IMR-90 (cell line): ENCODE measurements at regions of chr5 and their contacts with region 1.

Region 1: DNA sequence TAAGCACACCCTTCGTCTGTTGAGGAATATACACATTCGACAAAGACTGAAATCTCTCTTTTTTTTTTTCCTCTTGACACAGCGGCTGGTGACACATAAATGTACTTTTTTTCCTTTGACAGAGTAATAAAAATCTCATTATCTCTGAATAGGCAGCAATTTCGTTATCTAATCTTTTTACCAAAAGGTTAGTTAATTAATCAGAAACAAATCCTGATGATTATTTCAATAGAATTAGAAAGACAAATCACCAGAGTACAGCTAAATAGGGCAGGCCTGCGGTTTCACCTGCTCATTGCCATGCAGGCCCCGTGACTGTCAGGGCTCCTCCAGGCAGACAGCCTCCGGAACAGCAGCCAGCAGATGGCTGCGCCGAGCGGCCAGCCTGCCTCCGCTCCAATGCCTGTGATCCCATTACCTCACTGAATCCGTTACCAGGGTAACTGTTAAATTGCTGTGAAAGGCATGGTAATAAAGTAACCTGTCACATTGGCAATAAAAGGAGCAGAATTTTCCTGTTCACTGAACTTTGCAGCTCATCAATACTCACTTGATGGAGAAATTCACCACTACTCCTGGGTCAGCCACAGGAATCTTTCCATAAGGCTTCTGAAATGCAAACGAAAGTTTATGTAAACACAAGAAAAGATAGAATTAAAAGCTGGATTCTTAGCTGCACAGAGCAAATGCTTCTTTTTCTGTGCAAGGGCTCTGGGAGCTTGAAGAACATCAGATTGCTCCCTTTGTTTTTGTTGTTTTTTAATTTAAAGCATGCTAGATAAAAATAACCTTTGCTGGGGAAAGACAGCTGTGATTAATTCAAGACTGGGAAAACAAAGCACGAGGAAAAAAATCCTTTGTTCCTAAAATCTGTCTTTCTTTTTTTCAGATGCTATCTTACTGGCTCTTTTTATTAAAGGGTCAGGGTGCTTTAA is 666.4 kb upstream of the ZNF608 start:
- DNase-seq: peak; percentile 91
- ATAC-seq: peak; percentile 84
- H3K4me3 ChIP-seq: peak overlapping the region; percentile 10; the same call in 1 of the 2 replicates
- H3K27ac ChIP-seq: no peak overlapping the region
- H3K4me1 ChIP-seq: peaks cover 20% of the 10 kb centered on the region
- H3K27me3 ChIP-seq: no peaks in the 10 kb centered on the region
- CTCF ChIP-seq: peak; percentile 42
- POLR2A ChIP-seq: no peak
- RAD21 ChIP-seq: peak; percentile 55

Region 2: GRCh38 chr5:124649491-124650146 is 763.2 kb before region 1 on chr5:
- CTCF ChIA-PET with region 1: no interaction called
- POLR2A ChIA-PET with region 1: no interaction called
- dilution Hi-C with region 1: no loop called
- in situ Hi-C with region 1: no loop called
- intact Hi-C with region 1: loop called (anchors 5 kb)
- DNase-seq: peak; percentile 93
- ATAC-seq: peak; percentile 23; the same call in 1 of the 2 replicates
- H3K4me3 ChIP-seq: no peak overlapping the region
- H3K27ac ChIP-seq: peak overlapping the region; percentile 85
- H3K4me1 ChIP-seq: peaks cover 23% of the 10 kb centered on the region
- H3K27me3 ChIP-seq: no peaks in the 10 kb centered on the region
- CTCF ChIP-seq: no peak
- POLR2A ChIP-seq: no peak
- RAD21 ChIP-seq: 0 out of 2 replicates have a peak, but pooled peaks have one; percentile 8

Region 3: DNA sequence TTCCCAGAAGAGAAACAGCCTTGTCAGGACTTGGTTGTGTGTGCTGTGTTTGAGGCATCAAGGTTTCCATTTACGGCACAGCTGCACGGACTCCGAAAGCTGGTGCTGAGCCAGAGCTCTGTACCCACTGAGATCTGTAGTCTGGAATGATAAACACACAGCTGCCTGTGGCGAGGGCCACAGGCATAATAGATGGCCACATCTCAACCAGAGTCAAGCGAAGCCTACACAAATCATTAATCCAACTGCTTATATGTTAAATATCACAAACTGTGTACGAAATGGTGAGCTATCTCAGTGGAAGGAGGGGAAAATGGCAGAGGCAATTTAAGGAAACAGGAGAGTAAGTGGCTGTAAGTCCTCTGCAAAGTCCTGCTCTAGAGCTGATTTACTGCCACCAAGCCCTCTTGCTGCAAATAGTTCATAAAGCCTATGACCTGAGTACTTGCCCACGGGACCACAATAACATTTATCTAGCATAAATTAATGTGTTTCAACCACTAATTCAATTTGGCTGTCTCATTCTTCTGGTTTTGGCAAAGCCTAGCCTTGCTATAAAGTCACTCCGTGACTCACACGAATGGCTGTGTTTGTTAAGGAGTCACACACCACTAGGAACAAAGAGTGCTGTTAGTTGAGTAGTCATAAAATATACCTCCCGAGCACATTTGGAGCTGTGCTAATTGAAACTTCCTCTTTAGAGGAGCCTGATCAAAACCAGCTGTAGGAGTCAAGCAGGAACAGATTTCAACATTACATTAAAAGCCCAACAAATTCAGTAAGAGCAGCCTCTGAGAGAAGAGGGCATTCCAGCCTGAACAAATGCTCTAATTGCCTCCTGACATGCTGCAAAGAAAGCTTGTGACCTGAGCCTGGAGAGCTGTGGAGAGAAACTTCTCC is 72.2 kb after region 1 on chr5:
- CTCF ChIA-PET with region 1: interaction called, 4 read pairs
- POLR2A ChIA-PET with region 1: interaction called, 3 read pairs
- dilution Hi-C with region 1: no loop called
- in situ Hi-C with region 1: no loop called
- intact Hi-C with region 1: loop called (anchors 1 kb)
- DNase-seq: peak; percentile 97
- ATAC-seq: peak; percentile 85
- H3K4me3 ChIP-seq: peak overlapping the region; percentile 0; the same call in 1 of the 2 replicates
- H3K27ac ChIP-seq: peak overlapping the region; percentile 87
- H3K4me1 ChIP-seq: peaks cover 9% of the 10 kb centered on the region
- H3K27me3 ChIP-seq: no peaks in the 10 kb centered on the region; the same call in 1 of the 2 replicates
- CTCF ChIP-seq: no peak
- POLR2A ChIP-seq: no peak
- RAD21 ChIP-seq: no peak; the same call in 1 of the 2 replicates

Region 4: DNA sequence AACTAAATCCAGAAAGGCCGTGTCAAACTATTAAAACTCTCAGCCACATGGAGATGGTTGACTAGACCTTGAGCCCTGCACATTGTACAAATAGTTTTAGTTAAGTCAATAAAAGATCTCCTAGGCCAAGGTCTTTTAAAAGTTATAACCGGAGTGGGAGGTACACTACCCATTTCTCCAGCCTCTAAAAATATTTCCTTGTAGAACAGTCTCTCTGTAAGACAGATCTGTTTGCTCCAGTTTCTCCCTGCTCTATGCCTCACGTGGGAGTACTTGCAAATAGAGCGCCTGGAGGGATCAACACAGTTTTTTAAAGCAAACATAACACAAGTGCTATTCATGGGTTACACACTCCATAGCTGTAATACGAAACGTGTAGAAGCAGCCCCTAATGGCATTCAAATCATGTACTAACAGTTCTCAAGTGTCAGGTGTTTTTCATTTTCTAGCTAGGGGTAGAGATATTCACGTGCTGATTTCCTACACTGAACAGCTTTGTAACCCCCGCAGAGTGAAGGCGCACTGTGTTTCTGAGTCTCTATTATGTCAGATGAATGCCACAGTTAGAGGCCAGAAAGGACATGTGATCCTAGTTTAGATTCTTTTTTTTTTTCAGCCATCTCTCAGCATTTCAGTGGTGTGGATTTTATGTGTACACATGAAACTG is 307.0 kb after region 1 on chr5:
- CTCF ChIA-PET with region 1: no interaction called
- POLR2A ChIA-PET with region 1: no interaction called
- dilution Hi-C with region 1: no loop called
- in situ Hi-C with region 1: no loop called
- intact Hi-C with region 1: loop called (anchors 1 kb)
- DNase-seq: peak; percentile 18
- ATAC-seq: no peak
- H3K4me3 ChIP-seq: no peak overlapping the region
- H3K27ac ChIP-seq: no peak overlapping the region
- H3K4me1 ChIP-seq: peaks cover 3% of the 10 kb centered on the region; the same call in 1 of the 2 replicates
- H3K27me3 ChIP-seq: no peaks in the 10 kb centered on the region
- CTCF ChIP-seq: no peak
- POLR2A ChIP-seq: no peak
- RAD21 ChIP-seq: no peak

Region 5: DNA sequence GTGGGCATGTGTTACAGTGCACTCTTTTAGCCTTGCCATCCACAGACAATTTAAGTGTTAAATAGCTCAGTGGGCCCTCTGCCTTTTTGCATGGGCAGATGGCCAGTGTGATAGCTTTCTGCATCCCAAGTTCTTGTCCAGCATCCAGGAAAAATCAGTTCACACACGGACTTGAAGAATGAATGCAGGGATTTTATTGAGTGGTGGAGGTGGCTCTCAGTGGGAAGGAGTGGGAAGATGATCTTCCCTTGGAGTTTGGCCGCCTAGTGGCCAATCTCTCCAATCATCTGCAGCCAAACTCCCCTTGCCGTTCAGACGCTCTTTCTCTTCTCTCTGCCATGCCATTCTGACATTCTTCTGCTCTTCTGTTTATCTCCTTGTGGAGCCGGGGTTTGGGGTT is 687.9 kb after region 1 on chr5:
- CTCF ChIA-PET with region 1: no interaction called
- POLR2A ChIA-PET with region 1: no interaction called
- dilution Hi-C with region 1: no loop called
- in situ Hi-C with region 1: no loop called
- intact Hi-C with region 1: loop called (anchors 5 kb)
- DNase-seq: no peak
- ATAC-seq: no peak
- H3K4me3 ChIP-seq: no peak overlapping the region
- H3K27ac ChIP-seq: no peak overlapping the region
- H3K4me1 ChIP-seq: no peaks in the 10 kb centered on the region
- H3K27me3 ChIP-seq: no peaks in the 10 kb centered on the region
- CTCF ChIP-seq: peak; percentile 13; the same call in 1 of the 2 replicates
- POLR2A ChIP-seq: no peak
- RAD21 ChIP-seq: no peak